ENCODE measurements at regions of chr15 and their contacts with region 1.

Region 1: DNA sequence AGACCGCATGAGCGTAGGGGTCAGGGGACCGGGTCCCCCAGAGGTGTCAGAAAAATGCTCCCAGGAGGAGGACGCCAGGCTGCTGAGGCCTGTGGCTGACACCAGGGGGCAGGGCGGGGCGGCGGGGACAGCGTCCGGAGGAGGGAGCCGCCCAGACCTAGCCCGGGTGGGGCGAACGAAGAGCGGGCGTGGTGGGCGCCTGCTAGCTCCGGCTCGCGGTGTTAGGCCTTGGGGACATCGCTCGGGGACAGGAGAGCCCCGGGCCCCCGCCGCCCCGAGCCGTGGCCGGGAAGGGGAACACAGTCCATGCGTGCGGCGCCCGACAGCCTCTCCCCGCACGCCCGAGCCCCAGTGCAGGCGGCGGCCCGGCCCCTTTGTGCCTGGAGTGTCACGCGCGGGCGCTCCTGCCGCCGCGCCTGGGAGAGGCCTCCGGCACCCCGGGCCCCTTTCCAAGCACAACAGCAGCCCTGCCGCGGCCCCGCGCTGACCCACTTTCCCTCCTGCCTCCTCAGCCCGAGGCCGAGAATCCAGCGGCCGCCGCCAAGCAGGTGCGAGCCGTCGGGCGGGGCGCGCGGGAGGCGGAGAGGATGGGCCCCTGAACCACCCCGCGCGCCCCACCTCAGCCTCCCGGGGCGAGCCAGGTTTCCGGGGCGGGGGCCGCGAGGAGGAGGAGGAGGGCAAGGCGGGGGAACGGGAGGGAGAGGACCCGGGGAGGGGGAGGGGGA is 111.0 kb upstream of the KLF13 start:
- DNase-seq: peak; percentile 64

Region 2: GRCh38 chr15:31179693-31180092 is 36.0 kb before region 1 on chr15:
- in situ Hi-C with region 1: no loop called
- DNase-seq: no peak

Region 3: DNA sequence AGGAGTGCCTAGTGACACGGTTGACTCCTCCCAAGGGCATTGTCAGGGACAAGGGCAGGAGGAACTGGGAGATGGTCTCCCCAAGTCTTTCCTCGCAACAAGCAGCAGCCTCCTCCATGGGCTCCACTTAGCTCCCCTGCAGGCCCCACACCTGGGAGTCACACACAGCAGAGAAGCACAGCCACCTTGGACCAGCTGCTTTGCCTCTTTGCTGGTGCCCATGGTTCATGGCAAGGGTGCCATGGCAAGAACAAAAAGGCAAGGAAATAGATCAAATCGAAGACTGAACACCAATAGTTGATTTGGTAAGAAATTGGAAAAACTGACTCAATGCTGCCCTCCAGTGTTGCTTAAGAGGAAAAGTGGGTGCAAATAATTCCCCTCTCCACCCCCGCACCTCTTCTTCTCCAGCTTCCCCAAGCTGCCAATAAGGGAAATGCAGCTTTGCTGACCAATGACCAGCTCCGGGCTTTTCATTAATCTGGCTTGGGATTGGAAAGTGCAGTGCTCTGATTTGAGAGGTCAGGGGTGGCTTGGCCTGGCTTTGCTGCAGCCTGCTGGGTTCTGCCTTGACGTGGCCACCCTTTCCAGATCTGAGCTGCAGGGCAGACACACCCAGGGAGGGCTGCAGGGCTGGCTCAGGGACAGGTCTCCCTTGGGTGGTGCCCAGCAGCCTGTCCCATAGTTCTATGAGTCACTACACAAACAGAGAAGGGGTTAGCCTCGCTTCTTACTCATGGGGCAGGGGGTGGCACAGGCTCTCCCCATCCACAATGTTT is 273.0 kb after region 1 on chr15:
- in situ Hi-C with region 1: loop called (anchors 25 kb)
- DNase-seq: peak; percentile 93